Activated naive CD4-positive, alpha-beta T cell treated with anti-CD3 and anti-CD28 coated beads, Interleukin-2, amount 10 ng/mL, durations not matched to agents 7 days and 5 days (primary cell): ENCODE measurements at regions of chr11 and their contacts with region 1.

Region 1: GRCh38 chr11:59918987-59919589 is 19.1 kb upstream of the OOSP1 start:
- DNase-seq: peak; percentile 41
- H3K4me3 Mint-ChIP-seq: no peak overlapping the region
- H3K27ac Mint-ChIP-seq: no peak overlapping the region
- H3K4me1 Mint-ChIP-seq: no peaks in the 10 kb centered on the region
- H3K27me3 Mint-ChIP-seq: no peaks in the 10 kb centered on the region

Region 2: DNA sequence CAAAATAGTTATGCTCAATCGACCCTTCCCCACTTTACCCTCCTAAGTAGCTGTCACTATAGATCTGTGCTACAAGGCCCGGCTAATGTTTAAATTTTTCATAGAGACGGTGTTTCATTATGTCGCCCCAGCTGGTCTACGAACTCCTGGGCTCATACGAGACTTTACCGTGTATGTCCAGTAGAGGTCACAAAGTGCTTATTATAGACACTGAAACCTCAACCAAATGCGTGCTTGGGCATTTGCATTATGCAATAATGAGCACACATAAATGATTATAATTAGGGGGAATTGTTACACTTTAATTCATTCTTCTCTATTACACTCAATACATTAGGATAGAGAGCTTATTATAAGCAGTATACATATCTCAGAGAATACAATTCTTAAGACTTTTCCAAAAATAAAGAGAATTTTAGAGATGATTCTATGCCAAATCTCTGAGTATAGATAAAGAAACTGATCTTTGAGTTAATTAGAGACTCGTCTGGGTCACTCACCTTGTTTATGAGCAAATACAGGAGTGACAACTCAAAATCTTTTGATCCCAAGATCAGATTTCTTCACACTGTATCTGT is 96.0 kb before region 1 on chr11:
- CTCF ChIA-PET with region 1: interaction called, 11 read pairs
- DNase-seq: peak; percentile 47
- H3K4me3 Mint-ChIP-seq: no peak overlapping the region
- H3K27ac Mint-ChIP-seq: no peak overlapping the region
- H3K4me1 Mint-ChIP-seq: peaks cover 15% of the 10 kb centered on the region
- H3K27me3 Mint-ChIP-seq: peaks cover 4% of the 10 kb centered on the region